Activated naive CD4-positive, alpha-beta T cell treated with anti-CD3 and anti-CD28 coated beads for 36 hours (primary cell): ENCODE measurements at regions of chr7 and their contacts with region 1.

Region 1: DNA sequence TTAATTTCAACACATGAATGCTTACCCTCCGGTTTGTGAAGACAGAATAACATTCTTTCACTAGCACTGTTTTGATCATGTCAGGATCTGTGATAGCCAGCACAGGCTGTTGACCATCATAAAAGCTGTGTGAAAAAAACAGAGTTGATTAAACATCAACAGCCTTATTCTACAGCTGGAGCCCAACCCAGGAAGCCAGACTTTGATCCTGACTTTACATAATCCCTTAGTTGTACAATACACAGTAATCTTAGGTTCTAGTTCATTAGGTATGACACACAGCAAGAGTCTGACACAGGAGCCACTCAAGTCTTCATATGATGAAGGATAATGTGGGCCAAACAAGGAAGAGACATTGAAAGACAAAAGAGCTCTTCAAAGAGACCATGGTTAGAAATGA is 11.4 kb downstream of the CYP3A4 start:
- DNase-seq: no peak
- H3K4me3 Mint-ChIP-seq: no peak overlapping the region
- H3K27ac Mint-ChIP-seq: no peak overlapping the region
- H3K4me1 Mint-ChIP-seq: peaks cover 10% of the 10 kb centered on the region
- H3K27me3 Mint-ChIP-seq: peaks cover 70% of the 10 kb centered on the region

Region 2: DNA sequence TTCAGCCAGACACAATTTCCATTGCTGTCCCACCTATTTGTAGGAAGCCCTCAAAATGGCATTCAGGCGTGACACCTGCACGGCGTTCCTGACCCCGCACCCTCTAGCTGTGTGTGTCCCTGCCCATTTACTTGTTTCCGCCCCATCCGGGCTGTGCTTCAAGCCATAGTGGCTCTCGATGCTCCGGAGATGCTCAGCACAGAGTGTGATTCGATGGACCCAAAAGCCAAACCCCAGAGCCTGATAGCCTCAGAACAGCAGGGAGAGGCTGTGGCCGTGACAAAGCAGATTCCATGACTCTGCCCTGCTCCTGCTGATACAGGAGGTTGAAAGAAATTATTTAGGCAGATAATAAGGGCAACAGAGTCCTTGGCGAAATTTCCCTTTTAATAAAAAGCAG is 350.4 kb before region 1 on chr7:
- CTCF ChIA-PET with region 1: no interaction called
- intact Hi-C with region 1: no loop called
- DNase-seq: no peak
- H3K4me3 Mint-ChIP-seq: no peak overlapping the region
- H3K27ac Mint-ChIP-seq: no peak overlapping the region
- H3K4me1 Mint-ChIP-seq: peaks cover 2% of the 10 kb centered on the region
- H3K27me3 Mint-ChIP-seq: no peaks in the 10 kb centered on the region

Region 3: GRCh38 chr7:99733448-99733847 is 39.1 kb before region 1 on chr7:
- CTCF ChIA-PET with region 1: no interaction called
- intact Hi-C with region 1: loop called (anchors 5 kb)
- DNase-seq: no peak
- H3K4me3 Mint-ChIP-seq: no peak overlapping the region
- H3K27ac Mint-ChIP-seq: no peak overlapping the region
- H3K4me1 Mint-ChIP-seq: peaks cover 12% of the 10 kb centered on the region
- H3K27me3 Mint-ChIP-seq: no peaks in the 10 kb centered on the region

Region 4: GRCh38 chr7:100177045-100178001 is 404.8 kb after region 1 on chr7 and contains the starts of genes GPC2 and STAG3:
- CTCF ChIA-PET with region 1: no interaction called
- intact Hi-C with region 1: no loop called
- DNase-seq: peak; percentile 99
- H3K4me3 Mint-ChIP-seq: peak within 1 kb of the TSS; percentile 80
- H3K27ac Mint-ChIP-seq: peak within 1 kb of the TSS; percentile 30
- H3K4me1 Mint-ChIP-seq: peaks cover 43% of the 10 kb centered on the region
- H3K27me3 Mint-ChIP-seq: no peaks in the 10 kb centered on the region
- total RNA-seq, gene GPC2: 7.6 to 9.5 TPM
- total RNA-seq, gene STAG3: 38.4 to 41.0 TPM